Ascending aorta (tissue), 2 donors: ENCODE measurements at regions of chr14 and their contacts with region 1.

Region 1: GRCh38 chr14:61750708-61751474 is 11.3 kb upstream of the SNAPC1 start:
- DNase-seq: peak; percentile 71 to 94
- H3K4me3 ChIP-seq: peak overlapping the region; percentile 51 to 78
- H3K27ac ChIP-seq: peak overlapping the region; percentile 72 to 91
- H3K4me1 ChIP-seq: peaks cover 2 to 26% of the 10 kb centered on the region in 2 donors
- H3K27me3 ChIP-seq: no peaks in the 10 kb centered on the region
- CTCF ChIP-seq: no peak

Region 2: GRCh38 chr14:61694830-61695694 is 55.8 kb before region 1 on chr14 and contains the start of gene HIF1A:
- intact Hi-C with region 1: loop called (anchors 2 kb)
- DNase-seq: peak; percentile 91 to 98
- H3K4me3 ChIP-seq: peak within 1 kb of the TSS; percentile 95
- H3K27ac ChIP-seq: peak within 1 kb of the TSS; percentile 96 to 98
- H3K4me1 ChIP-seq: peaks cover 3 to 6% of the 10 kb centered on the region in 2 donors
- H3K27me3 ChIP-seq: no peaks in the 10 kb centered on the region
- CTCF ChIP-seq: no peak
- total RNA-seq, gene HIF1A: 87.0 TPM

Region 3: GRCh38 chr14:61761959-61762786 is 11.3 kb after region 1 on chr14 and contains the start of gene SNAPC1:
- intact Hi-C with region 1: loop called (anchors 1 kb)
- DNase-seq: peak; percentile 86 to 98
- H3K4me3 ChIP-seq: peak within 1 kb of the TSS; percentile 86 to 91
- H3K27ac ChIP-seq: peak within 1 kb of the TSS; percentile 79 to 82
- H3K4me1 ChIP-seq: peaks cover 0 to 16% of the 10 kb centered on the region in 2 donors
- H3K27me3 ChIP-seq: no peaks in the 10 kb centered on the region
- CTCF ChIP-seq: no peak
- total RNA-seq, gene SNAPC1: 2.7 TPM

Region 4: DNA sequence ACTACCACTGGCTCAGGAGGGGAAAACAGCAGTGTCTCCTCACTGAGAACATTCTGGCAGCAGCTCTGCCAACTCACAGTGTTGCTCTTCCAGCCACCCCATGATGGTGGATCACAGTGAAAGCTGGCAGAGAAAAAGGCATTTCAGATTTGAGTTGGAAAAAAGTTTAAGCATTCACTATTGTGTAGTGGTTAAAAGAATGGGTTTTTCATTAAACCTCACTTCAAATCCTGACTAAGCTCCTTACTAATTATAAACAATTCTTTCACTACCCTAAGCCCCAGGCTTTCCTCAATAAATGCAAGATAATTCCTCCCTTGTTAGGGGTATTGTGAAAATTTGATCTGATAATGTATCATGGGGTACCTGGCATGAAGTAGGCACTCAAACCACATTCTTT is 529.5 kb after region 1 on chr14:
- intact Hi-C with region 1: no loop called
- DNase-seq: no peak
- H3K4me3 ChIP-seq: no peak overlapping the region
- H3K27ac ChIP-seq: no peak overlapping the region
- H3K4me1 ChIP-seq: no peaks in the 10 kb centered on the region
- H3K27me3 ChIP-seq: no peaks in the 10 kb centered on the region
- CTCF ChIP-seq: no peak